Ovary (tissue), 10 donors: ENCODE measurements at regions of chr15 and their contacts with region 1.

Region 1: DNA sequence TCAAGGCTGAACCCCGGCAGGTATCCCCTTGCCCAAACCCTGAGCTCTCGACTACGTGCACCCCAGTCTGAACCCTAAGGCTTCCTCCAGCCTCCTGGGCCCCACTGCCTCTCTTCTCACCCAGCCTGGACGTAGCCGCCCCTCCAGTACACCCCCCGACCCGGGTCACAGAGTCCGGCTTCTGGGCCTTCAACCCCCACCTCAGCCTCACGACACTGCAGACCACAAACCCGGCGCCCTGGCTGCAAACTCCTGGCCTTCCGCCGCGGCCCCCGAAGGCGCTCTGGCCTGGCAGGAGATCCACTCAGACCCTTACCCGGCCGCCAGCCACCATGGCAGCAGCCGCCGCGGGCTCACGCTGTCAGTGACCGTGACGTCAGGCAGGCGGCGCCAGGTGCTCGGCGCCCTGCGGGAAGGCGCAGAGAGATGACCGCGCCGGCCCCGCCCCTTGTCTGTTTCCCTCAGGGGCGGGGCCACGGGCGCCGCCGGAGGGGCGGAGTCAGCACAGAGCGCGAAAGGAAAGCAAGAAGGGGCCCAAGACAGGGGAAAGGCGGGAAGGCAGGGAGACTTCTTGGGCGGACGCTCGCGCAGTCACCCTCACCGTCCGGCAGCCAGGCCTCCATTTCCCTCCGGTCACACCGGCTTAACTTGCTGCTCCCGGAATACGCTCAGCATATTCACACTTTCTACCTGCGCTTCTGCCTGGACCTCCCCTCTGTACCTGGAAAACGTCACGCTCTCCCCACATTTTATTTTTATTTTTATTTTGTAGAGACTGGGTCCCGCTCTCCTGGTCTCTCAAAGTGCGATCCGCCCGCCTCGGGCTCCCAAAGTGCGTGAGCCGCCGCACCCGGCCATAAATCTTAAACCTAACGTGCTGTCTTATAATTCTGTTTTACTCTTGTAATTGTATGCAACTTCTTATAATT is at the start of gene RMDN3:
- DNase-seq: peak; percentile 93 to 97 (median 96)
- H3K4me3 ChIP-seq: peak within 1 kb of the TSS; percentile 68
- H3K27ac ChIP-seq: peak within 1 kb of the TSS; percentile 44 to 83
- H3K4me1 ChIP-seq: peaks cover 1% of the 10 kb centered on the region
- H3K27me3 ChIP-seq: no peaks in the 10 kb centered on the region
- CTCF ChIP-seq: peak in 1 of 3 donors; percentile 26
- EP300 ChIP-seq: no peak
- POLR2A ChIP-seq: peak; percentile 74
- total RNA-seq, gene RMDN3: 19.2 to 35.6 (median 25.4) TPM

Region 2: GRCh38 chr15:40564591-40565332 is 190.4 kb before region 1 on chr15 and contains the start of gene CCDC32:
- intact Hi-C with region 1: loop called in 1 of 4 experiments (anchors 10 kb)
- DNase-seq: peak; percentile 94 to 97 (median 95)
- H3K4me3 ChIP-seq: peak within 1 kb of the TSS; percentile 88
- H3K27ac ChIP-seq: peak within 1 kb of the TSS; percentile 79 to 85
- H3K4me1 ChIP-seq: peaks cover 4% of the 10 kb centered on the region
- H3K27me3 ChIP-seq: no peaks in the 10 kb centered on the region
- CTCF ChIP-seq: no peak
- EP300 ChIP-seq: peak; percentile 37
- POLR2A ChIP-seq: peak; percentile 81
- total RNA-seq, gene CCDC32: 21.0 to 57.6 (median 31.0) TPM

Region 3: GRCh38 chr15:40814901-40815670 is 59.9 kb after region 1 on chr15:
- intact Hi-C with region 1: loop called in 1 of 4 experiments (anchors 5 kb)
- DNase-seq: peak in 3 of 5 donors; percentile 26 to 46 (median 28)
- H3K4me3 ChIP-seq: no peak overlapping the region
- H3K27ac ChIP-seq: no peak overlapping the region
- H3K4me1 ChIP-seq: no peaks in the 10 kb centered on the region
- H3K27me3 ChIP-seq: no peaks in the 10 kb centered on the region
- CTCF ChIP-seq: no peak
- EP300 ChIP-seq: no peak
- POLR2A ChIP-seq: no peak

Region 4: GRCh38 chr15:41429003-41429890 is 674.1 kb after region 1 on chr15:
- intact Hi-C with region 1: no loop called
- DNase-seq: no peak
- H3K4me3 ChIP-seq: no peak overlapping the region
- H3K27ac ChIP-seq: no peak overlapping the region
- H3K4me1 ChIP-seq: peaks cover 1% of the 10 kb centered on the region
- H3K27me3 ChIP-seq: no peaks in the 10 kb centered on the region
- CTCF ChIP-seq: no peak
- EP300 ChIP-seq: no peak
- POLR2A ChIP-seq: no peak